Stomach (tissue), 19 donors: ENCODE measurements at regions of chr19 and their contacts with region 1.

Region 1: GRCh38 chr19:44570984-44571684 is 41.7 kb upstream of the CEACAM20 start:
- DNase-seq: peak; percentile 65 to 89
- H3K4me3 ChIP-seq: no peak overlapping the region
- H3K27ac ChIP-seq: no peak overlapping the region
- H3K4me1 ChIP-seq: peaks cover 0 to 3% (median 2%) of the 10 kb centered on the region in 4 donors
- H3K27me3 ChIP-seq: peaks cover 0 to 29% (median 7%) of the 10 kb centered on the region in 3 donors
- CTCF ChIP-seq: peak in 5 of 7 experiments; percentile 36 to 71 (median 61)
- EP300 ChIP-seq: no peak
- POLR2A ChIP-seq: no peak

Region 2: GRCh38 chr19:44657211-44657921 is 86.2 kb after region 1 on chr19:
- intact Hi-C with region 1: loop called (anchors 5 kb)
- DNase-seq: peak; percentile 71 to 85
- H3K4me3 ChIP-seq: no peak overlapping the region
- H3K27ac ChIP-seq: no peak overlapping the region
- H3K4me1 ChIP-seq: peaks cover 0 to 19% (median 5%) of the 10 kb centered on the region in 4 donors
- H3K27me3 ChIP-seq: no peaks in the 10 kb centered on the region
- CTCF ChIP-seq: peak in 6 of 7 experiments; percentile 41 to 92 (median 91)
- EP300 ChIP-seq: no peak
- POLR2A ChIP-seq: no peak

Region 3: DNA sequence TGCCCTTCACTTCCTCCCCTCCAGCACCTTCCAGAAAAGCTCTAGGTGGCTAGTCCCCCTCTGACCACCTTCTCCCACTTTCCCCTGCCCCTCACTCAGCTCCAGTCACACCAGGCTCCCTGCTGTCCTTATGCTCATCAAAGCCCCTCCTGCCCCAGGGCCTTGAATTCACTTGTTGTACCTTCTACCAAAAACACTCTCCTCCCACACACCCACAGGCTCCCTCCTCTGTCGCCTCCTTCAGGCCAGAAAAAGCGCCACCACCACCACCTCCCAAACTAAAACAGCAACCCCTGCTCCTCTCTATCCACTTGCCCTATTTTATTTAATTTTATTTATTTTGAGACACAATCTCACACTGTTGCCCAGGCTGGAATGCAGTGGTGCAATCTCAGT is 123.0 kb after region 1 on chr19:
- intact Hi-C with region 1: no loop called
- DNase-seq: no peak
- H3K4me3 ChIP-seq: no peak overlapping the region
- H3K27ac ChIP-seq: peak overlapping the region; percentile 60 to 85 (median 82)
- H3K4me1 ChIP-seq: peaks cover 18 to 48% (median 37%) of the 10 kb centered on the region in 4 donors
- H3K27me3 ChIP-seq: peaks cover 0 to 19% (median 0%) of the 10 kb centered on the region in 3 donors
- CTCF ChIP-seq: no peak
- EP300 ChIP-seq: no peak
- POLR2A ChIP-seq: no peak